ENCODE measurements at regions of chr10 and their contacts with region 1.

Region 1: GRCh38 chr10:88091490-88092105 is 228.2 kb downstream of the PTEN start:
- DNase-seq: peak; percentile 72 to 83 (median 82)
- H3K4me3 ChIP-seq: no peak overlapping the region
- H3K4me3 Mint-ChIP-seq: peak overlapping the region in 6 of 8 donors; percentile 2 to 80 (median 62)
- H3K27ac ChIP-seq: peak overlapping the region; percentile 34
- H3K27ac Mint-ChIP-seq: peak overlapping the region; percentile 82 to 94 (median 92)
- H3K4me1 ChIP-seq: peaks cover 39% of the 10 kb centered on the region
- H3K4me1 Mint-ChIP-seq: peaks cover 40 to 47% (median 44%) of the 10 kb centered on the region in 4 donors
- H3K27me3 ChIP-seq: no peaks in the 10 kb centered on the region
- H3K27me3 Mint-ChIP-seq: no peaks in the 10 kb centered on the region

Region 2: DNA sequence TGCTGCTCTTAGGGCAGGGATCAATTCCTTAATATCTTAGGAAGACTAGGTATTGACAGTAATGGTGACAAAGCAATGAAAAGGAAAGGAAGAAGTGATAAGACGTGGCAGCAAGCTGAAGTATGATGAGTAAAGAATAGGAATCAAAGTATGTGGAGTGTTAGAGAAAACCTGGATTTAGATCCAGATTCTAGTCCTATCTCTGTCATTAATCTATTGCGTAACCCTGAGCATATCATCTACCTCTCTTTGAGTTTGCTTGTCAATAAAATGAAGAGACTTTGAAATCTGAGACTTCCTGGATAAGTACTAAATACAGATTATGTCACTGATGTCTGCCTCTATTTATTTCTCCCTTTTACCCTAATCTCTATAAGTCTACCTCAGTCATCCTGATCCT is 139.0 kb before region 1 on chr10:
- CTCF ChIA-PET with region 1: interaction called, 3 read pairs
- POLR2A ChIA-PET with region 1: no interaction called
- intact Hi-C with region 1: loop called (anchors 10 kb)
- DNase-seq: no peak
- H3K4me3 ChIP-seq: no peak overlapping the region
- H3K4me3 Mint-ChIP-seq: no peak overlapping the region
- H3K27ac ChIP-seq: no peak overlapping the region
- H3K27ac Mint-ChIP-seq: peak overlapping the region in 3 of 7 donors; percentile 34 to 76 (median 72)
- H3K4me1 ChIP-seq: no peaks in the 10 kb centered on the region
- H3K4me1 Mint-ChIP-seq: peaks cover 12 to 18% (median 15%) of the 10 kb centered on the region in 4 donors
- H3K27me3 ChIP-seq: no peaks in the 10 kb centered on the region
- H3K27me3 Mint-ChIP-seq: no peaks in the 10 kb centered on the region

Region 3: DNA sequence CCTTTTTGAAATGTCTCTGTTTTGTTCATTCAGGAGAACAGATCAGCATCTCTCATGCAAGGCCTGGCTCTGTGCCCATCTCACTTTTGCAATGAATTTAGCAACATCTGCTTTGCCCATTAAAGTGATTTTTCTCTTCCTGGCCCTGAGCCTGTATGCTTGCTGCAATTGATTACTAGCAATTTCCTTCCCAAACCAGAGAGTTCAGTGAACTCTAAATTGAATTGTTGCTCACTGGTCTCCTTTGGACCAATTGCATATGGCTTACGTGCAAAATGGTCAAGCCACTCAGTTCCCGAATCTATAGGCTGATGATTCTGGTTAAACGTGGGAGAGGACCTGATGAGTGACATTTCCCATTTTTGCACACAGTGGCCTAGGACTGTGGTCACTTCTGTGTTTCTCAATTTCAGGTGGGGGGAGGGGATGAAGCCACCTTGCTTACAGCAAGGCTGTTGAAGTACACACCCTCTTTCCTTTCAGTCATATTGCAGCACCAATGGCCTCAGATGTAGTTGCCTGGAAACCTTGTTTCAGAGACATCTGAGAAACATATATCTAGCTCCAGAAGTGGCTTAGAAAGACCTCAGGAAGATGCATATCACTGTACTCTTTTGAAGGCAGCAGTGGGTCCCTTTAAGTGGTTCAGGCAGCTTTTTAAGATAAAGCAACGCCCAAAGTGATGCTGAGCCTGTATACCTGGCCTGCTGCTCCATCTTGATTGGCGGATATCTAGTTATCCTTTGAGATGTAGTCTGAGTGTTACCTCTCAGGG is 26.8 kb before region 1 on chr10:
- CTCF ChIA-PET with region 1: interaction called, 9 read pairs
- POLR2A ChIA-PET with region 1: interaction called, 17 read pairs
- intact Hi-C with region 1: loop called (anchors 2 kb)
- DNase-seq: peak; percentile 47 to 81 (median 76)
- H3K4me3 ChIP-seq: no peak overlapping the region
- H3K4me3 Mint-ChIP-seq: peak overlapping the region in 7 of 8 donors; percentile 32 to 81 (median 59)
- H3K27ac ChIP-seq: no peak overlapping the region
- H3K27ac Mint-ChIP-seq: peak overlapping the region; percentile 84 to 97 (median 95)
- H3K4me1 ChIP-seq: peaks cover 43% of the 10 kb centered on the region
- H3K4me1 Mint-ChIP-seq: peaks cover 45 to 72% (median 50%) of the 10 kb centered on the region in 4 donors
- H3K27me3 ChIP-seq: no peaks in the 10 kb centered on the region
- H3K27me3 Mint-ChIP-seq: no peaks in the 10 kb centered on the region

Region 4: DNA sequence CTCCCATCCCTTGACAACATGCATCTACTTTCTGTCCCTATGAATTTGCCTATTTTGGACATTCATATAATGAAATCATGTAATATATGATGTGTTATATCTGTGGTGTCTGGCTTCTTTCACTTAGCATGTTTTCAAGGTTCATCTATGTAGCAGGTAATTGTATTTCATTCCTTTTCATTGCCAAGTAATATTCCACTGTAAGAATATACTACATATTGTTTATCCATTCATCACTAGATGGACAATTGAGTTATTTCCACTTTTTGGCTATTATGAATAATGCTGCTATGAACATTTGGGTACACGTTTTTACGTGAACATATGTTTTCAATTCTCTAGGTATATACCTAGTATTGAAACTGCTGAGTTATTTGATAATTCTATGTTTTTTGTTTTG is 10.1 kb after region 1 on chr10:
- CTCF ChIA-PET with region 1: no interaction called
- POLR2A ChIA-PET with region 1: no interaction called
- intact Hi-C with region 1: no loop called
- DNase-seq: no peak
- H3K4me3 ChIP-seq: no peak overlapping the region
- H3K4me3 Mint-ChIP-seq: no peak overlapping the region
- H3K27ac ChIP-seq: no peak overlapping the region
- H3K27ac Mint-ChIP-seq: peak overlapping the region in 1 of 7 donors; percentile 14
- H3K4me1 ChIP-seq: no peaks in the 10 kb centered on the region
- H3K4me1 Mint-ChIP-seq: no peaks in the 10 kb centered on the region
- H3K27me3 ChIP-seq: no peaks in the 10 kb centered on the region
- H3K27me3 Mint-ChIP-seq: no peaks in the 10 kb centered on the region

Region 5: DNA sequence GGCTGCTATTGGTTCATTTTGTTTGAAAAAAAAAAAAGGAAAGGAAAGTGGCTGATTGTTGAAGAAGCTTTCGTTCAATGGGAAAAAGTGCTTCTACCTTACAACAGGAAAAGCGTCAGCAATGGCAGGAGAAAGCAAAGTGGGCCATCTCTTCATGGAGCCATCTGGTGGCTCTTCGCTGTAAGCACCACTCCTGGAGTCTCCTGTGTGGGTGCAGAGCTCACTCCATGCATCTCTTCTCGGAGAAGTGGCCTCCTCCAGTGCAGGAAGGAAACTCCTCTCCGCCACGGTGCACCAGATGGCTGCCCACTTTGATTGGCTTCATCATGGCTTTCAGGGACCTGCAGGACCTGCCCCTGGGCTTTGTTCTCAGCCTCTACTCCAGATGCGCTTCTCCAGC is 22.8 kb after region 1 on chr10:
- CTCF ChIA-PET with region 1: interaction called, 21 read pairs
- POLR2A ChIA-PET with region 1: interaction called, 8 read pairs
- intact Hi-C with region 1: no loop called
- DNase-seq: peak in 2 of 5 donors; percentile 13 to 18
- H3K4me3 ChIP-seq: no peak overlapping the region
- H3K4me3 Mint-ChIP-seq: no peak overlapping the region
- H3K27ac ChIP-seq: no peak overlapping the region
- H3K27ac Mint-ChIP-seq: peak overlapping the region in 2 of 7 donors; percentile 4 to 13
- H3K4me1 ChIP-seq: peaks cover 32% of the 10 kb centered on the region
- H3K4me1 Mint-ChIP-seq: peaks cover 7 to 17% (median 10%) of the 10 kb centered on the region in 4 donors
- H3K27me3 ChIP-seq: no peaks in the 10 kb centered on the region
- H3K27me3 Mint-ChIP-seq: peaks cover 0 to 1% of the 10 kb centered on the region in 2 donors

Region 6: GRCh38 chr10:88270871-88271713 is 179.5 kb after region 1 on chr10:
- CTCF ChIA-PET with region 1: no interaction called
- POLR2A ChIA-PET with region 1: interaction called, 4 read pairs
- intact Hi-C with region 1: loop called (anchors 10 kb)
- DNase-seq: peak; percentile 66 to 79 (median 71)
- H3K4me3 ChIP-seq: peak overlapping the region; percentile 3 to 6
- H3K4me3 Mint-ChIP-seq: peak overlapping the region; percentile 76 to 81 (median 78)
- H3K27ac ChIP-seq: peak overlapping the region; percentile 32
- H3K27ac Mint-ChIP-seq: peak overlapping the region; percentile 87 to 93 (median 92)
- H3K4me1 ChIP-seq: peaks cover 57% of the 10 kb centered on the region
- H3K4me1 Mint-ChIP-seq: peaks cover 33 to 54% (median 43%) of the 10 kb centered on the region in 4 donors
- H3K27me3 ChIP-seq: no peaks in the 10 kb centered on the region
- H3K27me3 Mint-ChIP-seq: no peaks in the 10 kb centered on the region